ENCODE measurements at regions of chr19 and their contacts with region 1.

Region 1: DNA sequence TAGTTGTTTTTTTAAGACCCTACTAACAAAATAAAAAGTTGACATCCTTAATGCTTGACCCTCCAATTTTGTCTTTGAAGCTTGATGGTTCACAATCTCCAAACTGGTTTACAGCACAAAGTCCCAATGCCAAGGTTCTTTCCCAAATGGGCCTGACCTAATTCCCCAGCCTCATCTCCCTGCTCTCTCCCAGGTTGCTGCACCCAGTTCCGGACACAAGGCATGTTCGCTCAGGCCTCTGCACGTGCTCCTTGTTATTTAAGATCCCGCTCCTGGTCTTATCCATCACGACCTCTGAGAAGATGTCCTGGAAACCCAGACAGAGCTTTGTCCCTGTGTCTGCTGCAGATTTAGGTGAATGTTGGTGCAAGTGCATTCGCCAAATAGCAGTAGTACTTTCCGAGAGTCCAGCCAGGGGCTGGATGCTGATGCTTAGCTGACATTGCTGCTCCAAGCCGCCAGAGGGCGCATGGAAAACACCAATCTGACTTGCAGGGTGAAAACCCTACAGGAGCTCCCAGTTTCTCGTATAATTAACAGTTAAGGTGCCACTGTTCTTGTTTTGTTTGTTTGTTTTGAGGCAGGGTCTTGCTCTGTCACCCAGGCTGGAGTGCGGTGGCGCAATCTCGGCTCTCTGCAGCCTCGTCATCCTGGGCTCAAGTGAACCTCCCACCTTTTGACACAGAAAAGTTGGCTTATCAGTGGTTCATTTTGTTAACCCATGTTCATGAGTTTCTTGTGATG is 18.5 kb downstream of the LYPD3 start:
- DNase-seq: peak; percentile 54 to 85
- H3K4me3 ChIP-seq: no peak overlapping the region
- H3K27ac ChIP-seq: no peak overlapping the region
- H3K4me1 ChIP-seq: no peaks in the 10 kb centered on the region
- H3K27me3 ChIP-seq: no peaks in the 10 kb centered on the region
- CTCF ChIP-seq: peak; percentile 89 to 95 (median 94)
- EP300 ChIP-seq: no peak
- POLR2A ChIP-seq: no peak
- RAD21 ChIP-seq: peak; percentile 93 to 94

Region 2: DNA sequence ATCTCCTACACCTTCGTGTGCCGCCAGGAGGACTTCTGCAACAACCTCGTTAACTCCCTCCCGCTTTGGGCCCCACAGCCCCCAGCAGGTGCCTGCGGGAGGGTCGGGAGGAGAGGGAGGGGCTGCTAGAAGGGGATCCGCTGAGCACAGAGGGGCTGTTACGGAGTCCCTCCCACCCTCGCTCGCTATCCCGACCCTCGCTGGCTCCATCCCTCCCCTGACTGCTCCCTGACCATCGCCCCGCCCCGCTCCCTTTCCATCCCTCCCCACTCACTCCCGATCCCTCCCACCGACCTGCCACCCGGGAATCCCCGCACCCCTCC is 92.7 kb before region 1 on chr19:
- CTCF ChIA-PET with region 1: no interaction called
- POLR2A ChIA-PET with region 1: no interaction called
- DNase-seq: peak; percentile 17 to 83
- H3K4me3 ChIP-seq: peak overlapping the region; percentile 76 to 82 (median 81)
- H3K27ac ChIP-seq: no peak overlapping the region
- H3K4me1 ChIP-seq: peaks cover 0 to 4% (median 1%) of the 10 kb centered on the region in 4 experiments; a peak in 2 of 7 replicates
- H3K27me3 ChIP-seq: peaks cover 0 to 6% (median 4%) of the 10 kb centered on the region in 4 experiments; a peak in 3 of 7 replicates
- CTCF ChIP-seq: no peak
- EP300 ChIP-seq: peak in 1 of 2 experiments; percentile 87; a peak in 1 of 3 replicates
- POLR2A ChIP-seq: no peak
- RAD21 ChIP-seq: no peak

Region 3: DNA sequence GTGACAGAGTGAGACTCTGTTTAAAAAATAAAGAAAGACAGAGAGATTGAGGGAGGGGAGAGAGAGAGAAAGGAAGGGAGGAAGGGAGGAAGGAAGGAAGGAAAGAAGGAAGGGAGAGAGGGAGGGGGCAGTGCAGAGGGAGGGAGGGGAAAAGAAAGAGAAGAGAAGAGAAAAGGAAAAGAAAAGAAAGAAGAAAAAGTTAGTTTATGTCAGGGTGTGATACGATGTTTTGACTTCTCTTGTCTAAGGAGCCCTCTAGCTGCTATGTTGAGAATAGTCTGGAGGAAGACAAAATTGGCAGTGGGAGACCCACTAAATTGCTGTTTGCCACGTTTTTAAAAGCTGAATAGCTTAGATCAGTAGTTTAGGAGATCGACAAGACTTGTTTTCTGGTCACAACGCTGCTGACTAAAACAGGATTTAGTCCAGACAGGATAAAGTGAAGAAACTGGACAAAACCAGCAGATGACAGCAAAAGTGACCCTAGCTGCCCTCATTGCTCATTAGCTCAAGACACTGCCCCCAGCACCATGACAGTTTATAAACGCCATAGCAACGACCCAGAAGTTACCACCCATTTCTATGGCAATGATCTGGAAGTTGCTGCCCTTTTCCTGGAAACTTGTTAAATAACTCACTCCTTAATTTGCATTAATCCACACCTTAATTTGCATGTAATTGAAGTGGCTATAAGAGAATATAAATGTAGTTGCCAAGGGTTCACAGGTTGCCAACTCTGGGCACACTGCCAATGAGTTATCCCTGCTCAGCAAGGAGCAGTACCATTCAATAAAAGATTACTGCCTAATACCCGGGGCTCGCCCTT is 21.1 kb before region 1 on chr19:
- CTCF ChIA-PET with region 1: interaction called, 44 read pairs
- POLR2A ChIA-PET with region 1: no interaction called
- DNase-seq: no peak
- H3K4me3 ChIP-seq: no peak overlapping the region
- H3K27ac ChIP-seq: no peak overlapping the region
- H3K4me1 ChIP-seq: peaks cover 0 to 1% (median 0%) of the 10 kb centered on the region in 4 experiments; a peak in 2 of 7 replicates
- H3K27me3 ChIP-seq: no peaks in the 10 kb centered on the region
- CTCF ChIP-seq: peak in 2 of 3 experiments; percentile 56 to 63; a peak in 2 of 4 replicates
- EP300 ChIP-seq: no peak
- POLR2A ChIP-seq: no peak
- RAD21 ChIP-seq: peak; percentile 66 to 70

Region 4: DNA sequence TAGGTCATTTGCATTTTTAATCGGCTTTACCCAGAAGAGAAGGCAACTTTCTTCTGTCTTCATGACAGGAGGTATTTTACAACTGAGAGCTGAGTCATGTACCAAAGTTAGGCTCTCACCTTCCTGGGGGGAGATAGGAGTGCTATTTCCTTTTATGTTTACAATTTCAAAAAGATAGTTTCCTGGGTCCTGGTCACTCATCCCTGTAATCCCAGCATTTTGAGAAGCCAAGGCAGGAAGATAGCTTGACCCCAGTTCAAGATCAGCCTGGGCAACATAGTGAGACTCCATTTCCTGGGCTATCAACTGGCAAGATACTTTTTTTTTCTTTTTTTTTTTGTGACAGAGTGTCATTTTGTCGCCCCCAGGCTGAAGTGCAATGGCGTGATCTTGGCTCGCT is 10.9 kb after region 1 on chr19:
- CTCF ChIA-PET with region 1: interaction called, 33 read pairs
- POLR2A ChIA-PET with region 1: interaction called, 4 read pairs
- DNase-seq: no peak
- H3K4me3 ChIP-seq: no peak overlapping the region
- H3K27ac ChIP-seq: no peak overlapping the region
- H3K4me1 ChIP-seq: peaks cover 0 to 2% (median 0%) of the 10 kb centered on the region in 4 experiments; a peak in 2 of 7 replicates
- H3K27me3 ChIP-seq: peaks cover 0 to 8% (median 1%) of the 10 kb centered on the region in 4 experiments; a peak in 2 of 7 replicates
- CTCF ChIP-seq: no peak
- EP300 ChIP-seq: no peak
- POLR2A ChIP-seq: no peak
- RAD21 ChIP-seq: no peak

Region 5: GRCh38 chr19:43489310-43489709 is 42.4 kb after region 1 on chr19:
- CTCF ChIA-PET with region 1: interaction called, 14 read pairs
- POLR2A ChIA-PET with region 1: no interaction called
- DNase-seq: no peak
- H3K4me3 ChIP-seq: no peak overlapping the region
- H3K27ac ChIP-seq: no peak overlapping the region
- H3K4me1 ChIP-seq: no peaks in the 10 kb centered on the region
- H3K27me3 ChIP-seq: no peaks in the 10 kb centered on the region
- CTCF ChIP-seq: no peak
- EP300 ChIP-seq: no peak
- POLR2A ChIP-seq: no peak
- RAD21 ChIP-seq: no peak

Region 6: GRCh38 chr19:43510713-43511112 is 63.8 kb after region 1 on chr19:
- CTCF ChIA-PET with region 1: interaction called, 13 read pairs
- POLR2A ChIA-PET with region 1: no interaction called
- DNase-seq: no peak
- H3K4me3 ChIP-seq: no peak overlapping the region
- H3K27ac ChIP-seq: no peak overlapping the region
- H3K4me1 ChIP-seq: no peaks in the 10 kb centered on the region
- H3K27me3 ChIP-seq: no peaks in the 10 kb centered on the region
- CTCF ChIP-seq: no peak
- EP300 ChIP-seq: no peak
- POLR2A ChIP-seq: no peak
- RAD21 ChIP-seq: no peak

Region 7: DNA sequence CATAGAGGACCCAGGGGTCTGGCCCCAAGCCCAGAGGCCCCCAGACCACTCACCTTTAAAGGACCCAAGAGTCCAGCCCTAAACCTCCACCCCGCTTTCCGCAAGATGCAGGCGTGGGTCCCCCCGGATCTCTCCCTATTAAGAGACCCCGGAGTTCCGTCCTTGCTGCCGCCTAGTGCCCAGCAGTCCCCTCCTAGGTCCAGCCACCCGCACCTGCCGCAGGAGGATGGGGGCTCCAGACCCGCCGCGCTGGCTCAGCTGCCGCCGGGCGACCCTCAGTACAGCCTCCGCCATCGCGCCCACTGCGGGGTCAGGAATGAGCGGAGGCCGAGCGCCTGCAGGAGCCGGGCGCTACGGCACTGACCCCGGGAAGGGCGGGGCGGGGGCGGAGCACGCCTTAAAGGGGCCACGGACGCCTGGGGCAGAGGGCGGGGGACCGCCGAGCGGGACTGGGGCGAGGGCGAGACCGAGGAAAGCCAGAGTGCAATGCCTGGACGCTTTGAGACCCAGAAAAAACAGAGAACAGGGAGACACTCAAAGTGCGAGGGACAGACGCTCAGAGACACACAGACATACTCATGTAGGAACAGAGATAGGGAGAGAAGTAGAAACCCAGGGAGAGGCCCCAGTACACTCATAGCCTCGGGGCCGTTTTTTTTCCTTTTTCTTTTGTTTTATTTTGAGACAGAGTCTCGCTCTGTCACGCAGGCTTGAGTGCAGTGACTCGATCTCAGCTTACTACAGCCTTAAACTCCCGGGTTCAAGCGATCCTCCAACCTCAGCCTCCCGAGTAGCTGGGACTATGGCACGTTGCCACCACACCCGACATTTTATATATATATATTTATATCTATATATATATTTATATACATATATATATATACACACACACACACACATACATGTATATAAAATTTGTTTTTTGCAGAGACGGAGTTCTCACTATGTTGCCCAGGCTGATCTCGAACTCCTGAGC is 80.3 kb after region 1 on chr19 and contains the start of gene ETHE1:
- CTCF ChIA-PET with region 1: interaction called, 192 read pairs
- POLR2A ChIA-PET with region 1: interaction called, 3 read pairs
- DNase-seq: peak in 1 of 2 experiments; percentile 92
- H3K4me3 ChIP-seq: peak within 1 kb of the TSS; percentile 64 to 92 (median 74)
- H3K27ac ChIP-seq: no peak within 1 kb of the TSS
- H3K4me1 ChIP-seq: peaks cover 0 to 11% (median 5%) of the 10 kb centered on the region in 4 experiments; a peak in 6 of 7 replicates
- H3K27me3 ChIP-seq: peaks cover 2 to 14% (median 10%) of the 10 kb centered on the region in 4 experiments
- CTCF ChIP-seq: no peak
- EP300 ChIP-seq: no peak
- POLR2A ChIP-seq: peak in 1 of 2 experiments; percentile 62; a peak in 1 of 3 replicates
- RAD21 ChIP-seq: peak in 1 of 2 experiments; percentile 6; a peak in 1 of 4 replicates
- total RNA-seq, gene ETHE1: 18.6 and 19.9 TPM in 2 replicates

Region 8: DNA sequence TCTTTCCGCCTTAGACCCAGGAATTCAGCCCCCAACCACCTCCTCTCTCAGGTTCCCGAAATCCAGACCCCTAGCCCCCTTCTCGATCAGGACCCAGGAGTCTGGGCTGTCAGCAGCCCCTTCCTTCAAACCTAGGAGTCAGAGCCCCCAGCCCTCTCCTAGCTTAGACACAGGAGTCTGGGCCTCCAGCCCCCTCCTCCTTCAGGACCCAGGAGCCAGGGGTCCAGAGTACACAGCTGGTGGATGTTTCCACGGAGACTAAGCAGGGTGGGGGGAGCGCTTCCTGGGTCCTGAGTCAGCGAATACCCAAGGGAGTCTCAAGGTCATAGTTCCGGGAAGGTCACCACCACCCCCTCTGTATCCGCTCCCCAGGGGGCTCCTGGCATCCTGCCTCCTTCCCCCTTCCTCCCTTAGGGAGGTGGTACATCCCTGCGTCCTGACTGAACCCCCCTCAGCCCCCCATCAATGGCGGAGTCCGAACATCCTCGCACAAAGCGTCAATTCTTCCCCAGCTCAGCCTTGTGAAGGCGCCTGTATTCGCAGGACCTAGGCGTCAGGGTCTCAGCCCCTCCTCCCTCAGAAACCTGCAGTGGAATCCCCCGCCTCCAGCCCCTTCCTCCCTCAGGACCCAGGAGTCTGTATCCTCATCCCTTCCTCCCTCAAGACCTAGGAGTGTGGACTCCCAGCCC is 188.1 kb after region 1 on chr19:
- CTCF ChIA-PET with region 1: no interaction called
- POLR2A ChIA-PET with region 1: no interaction called
- DNase-seq: peak in 1 of 2 experiments; percentile 68
- H3K4me3 ChIP-seq: peak overlapping the region; percentile 43 to 66 (median 59)
- H3K27ac ChIP-seq: no peak overlapping the region
- H3K4me1 ChIP-seq: peaks cover 9 to 25% (median 18%) of the 10 kb centered on the region in 4 experiments
- H3K27me3 ChIP-seq: peaks cover 5 to 28% (median 17%) of the 10 kb centered on the region in 4 experiments
- CTCF ChIP-seq: no peak
- EP300 ChIP-seq: no peak
- POLR2A ChIP-seq: peak in 1 of 2 experiments; percentile 28; a peak in 2 of 3 replicates
- RAD21 ChIP-seq: no peak

Measured in H1 (cell line).